A549 (cell line): ENCODE measurements at regions of chr19 and their contacts with region 1.

Region 1: DNA sequence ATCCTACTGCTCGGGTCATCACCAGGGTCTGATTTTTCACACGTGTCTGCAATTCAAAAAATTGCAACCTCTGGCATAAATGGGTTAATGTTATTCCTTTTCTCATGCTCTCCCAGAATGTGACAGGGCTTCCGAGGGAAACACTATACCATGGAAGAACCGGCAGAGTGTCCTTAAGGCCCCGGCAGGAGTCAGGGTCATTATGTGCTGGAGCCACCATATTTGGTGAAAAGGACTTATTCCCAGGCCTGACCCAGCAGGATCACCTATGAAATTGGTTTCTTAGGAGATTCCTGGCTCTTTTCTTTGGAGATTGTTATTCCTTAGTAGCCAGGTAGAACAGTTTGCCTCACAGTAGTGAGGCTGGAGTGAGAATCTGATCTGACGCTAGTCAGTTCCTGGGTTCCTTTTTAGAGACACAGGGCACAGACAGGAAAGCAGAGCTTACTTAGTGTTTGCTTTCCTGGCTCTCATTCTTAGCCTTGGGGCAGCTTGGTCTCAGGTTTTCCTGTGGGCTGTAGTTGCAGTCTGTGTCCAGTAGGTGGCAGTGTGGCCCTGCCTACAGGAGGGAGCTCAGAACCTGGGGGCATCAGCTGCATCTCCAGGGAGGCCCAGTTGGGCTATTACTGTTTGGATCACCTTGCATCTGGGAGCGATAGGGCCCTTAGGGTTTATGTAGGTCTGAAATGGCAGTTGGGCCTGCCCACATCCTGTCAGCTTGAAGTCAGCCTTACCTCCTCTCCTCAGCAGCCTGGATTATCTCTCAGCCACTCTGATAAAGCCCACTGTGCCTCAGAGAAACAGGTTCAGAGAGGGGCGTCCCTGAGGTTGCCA is 12.4 kb downstream of the SNRNP70 start:
- DNase-seq: peak; percentile 88 to 89
- ATAC-seq: peak; percentile 78 to 83
- H3K4me3 ChIP-seq: no peak overlapping the region
- H3K27ac ChIP-seq: peak overlapping the region in 1 of 2 experiments; percentile 46; a peak in 2 of 6 replicates
- H3K4me1 ChIP-seq: peaks cover 21% of the 10 kb centered on the region
- CTCF ChIP-seq: peak; percentile 99
- EP300 ChIP-seq: no peak
- POLR2A ChIP-seq: no peak
- RAD21 ChIP-seq: peak; percentile 88 to 91

Region 2: GRCh38 chr19:48970923-48971395 is 126.7 kb before region 1 on chr19:
- CTCF ChIA-PET with region 1: no interaction called
- POLR2A ChIA-PET with region 1: no interaction called
- DNase-seq: peak; percentile 86 to 88
- ATAC-seq: peak; percentile 25 to 55
- H3K4me3 ChIP-seq: no peak overlapping the region
- H3K27ac ChIP-seq: peak overlapping the region in 1 of 2 experiments; percentile 63; a peak in 3 of 6 replicates
- H3K4me1 ChIP-seq: peaks cover 23% of the 10 kb centered on the region
- CTCF ChIP-seq: peak; percentile 98
- EP300 ChIP-seq: no peak
- POLR2A ChIP-seq: no peak
- RAD21 ChIP-seq: peak; percentile 96 to 97

Region 3: GRCh38 chr19:48999481-49000325 is 98.0 kb before region 1 on chr19:
- CTCF ChIA-PET with region 1: interaction called, 22 read pairs
- POLR2A ChIA-PET with region 1: no interaction called
- DNase-seq: peak; percentile 81 to 85
- ATAC-seq: peak; percentile 84 to 89
- H3K4me3 ChIP-seq: no peak overlapping the region
- H3K27ac ChIP-seq: no peak overlapping the region
- H3K4me1 ChIP-seq: peaks cover 9% of the 10 kb centered on the region; the same call in 2 of the 3 replicates
- CTCF ChIP-seq: peak; percentile 82
- EP300 ChIP-seq: no peak
- POLR2A ChIP-seq: no peak
- RAD21 ChIP-seq: peak; percentile 69

Region 4: GRCh38 chr19:49085020-49085867 is 12.4 kb before region 1 on chr19 and contains the start of gene SNRNP70:
- CTCF ChIA-PET with region 1: interaction called, 58 read pairs
- POLR2A ChIA-PET with region 1: no interaction called
- DNase-seq: peak; percentile 100
- ATAC-seq: peak; percentile 94 to 95
- H3K4me3 ChIP-seq: peak within 1 kb of the TSS; percentile 73
- H3K27ac ChIP-seq: peak within 1 kb of the TSS; percentile 88 to 91
- H3K4me1 ChIP-seq: peaks cover 20% of the 10 kb centered on the region
- CTCF ChIP-seq: no peak
- EP300 ChIP-seq: no peak
- POLR2A ChIP-seq: peak; percentile 94
- RAD21 ChIP-seq: no peak
- polyA plus RNA-seq, gene SNRNP70: 214 and 220 TPM in 2 replicates

Region 5: GRCh38 chr19:49133621-49134454 is 36.2 kb after region 1 on chr19:
- CTCF ChIA-PET with region 1: interaction called, 49 read pairs
- POLR2A ChIA-PET with region 1: no interaction called
- DNase-seq: peak; percentile 72 to 73
- ATAC-seq: peak; percentile 58 to 76
- H3K4me3 ChIP-seq: peak overlapping the region; percentile 17
- H3K27ac ChIP-seq: peak overlapping the region; percentile 6 to 54; a peak in 3 of 6 replicates
- H3K4me1 ChIP-seq: no peaks in the 10 kb centered on the region
- CTCF ChIP-seq: no peak
- EP300 ChIP-seq: no peak
- POLR2A ChIP-seq: no peak
- RAD21 ChIP-seq: no peak

Region 6: GRCh38 chr19:49165111-49165750 is 67.6 kb after region 1 on chr19:
- CTCF ChIA-PET with region 1: interaction called, 30 read pairs
- POLR2A ChIA-PET with region 1: no interaction called
- DNase-seq: no peak
- ATAC-seq: no peak; a peak in 1 of 6 replicates
- H3K4me3 ChIP-seq: no peak overlapping the region
- H3K27ac ChIP-seq: no peak overlapping the region
- H3K4me1 ChIP-seq: peaks cover 5% of the 10 kb centered on the region; the same call in 2 of the 3 replicates
- CTCF ChIP-seq: no peak
- EP300 ChIP-seq: no peak
- POLR2A ChIP-seq: no peak
- RAD21 ChIP-seq: no peak

Region 7: DNA sequence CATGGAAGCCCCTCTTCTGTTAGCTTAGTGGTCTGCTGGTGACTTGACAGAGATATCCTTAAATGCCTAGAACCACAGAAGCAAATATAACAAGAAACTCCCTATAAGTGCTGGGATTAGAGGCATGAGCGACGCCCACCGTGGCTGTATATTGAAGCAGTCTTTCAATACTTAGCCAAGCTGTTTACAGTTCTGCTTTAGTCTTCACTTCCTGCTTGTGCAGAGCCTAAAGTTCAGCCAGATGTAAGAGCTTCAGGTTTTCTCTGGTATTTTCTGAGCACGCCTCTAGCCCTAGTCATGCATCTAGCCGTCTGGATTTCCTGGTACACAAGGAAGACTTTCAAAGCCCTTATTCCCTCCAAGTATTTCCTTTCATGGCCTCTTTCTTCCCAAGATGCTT is 88.4 kb after region 1 on chr19:
- CTCF ChIA-PET with region 1: no interaction called
- POLR2A ChIA-PET with region 1: no interaction called
- DNase-seq: no peak
- ATAC-seq: no peak
- H3K4me3 ChIP-seq: no peak overlapping the region
- H3K27ac ChIP-seq: no peak overlapping the region
- H3K4me1 ChIP-seq: no peaks in the 10 kb centered on the region
- CTCF ChIP-seq: no peak
- EP300 ChIP-seq: no peak
- POLR2A ChIP-seq: no peak
- RAD21 ChIP-seq: no peak